ENCODE measurements at regions of chr5 and their contacts with region 1.

Region 1: DNA sequence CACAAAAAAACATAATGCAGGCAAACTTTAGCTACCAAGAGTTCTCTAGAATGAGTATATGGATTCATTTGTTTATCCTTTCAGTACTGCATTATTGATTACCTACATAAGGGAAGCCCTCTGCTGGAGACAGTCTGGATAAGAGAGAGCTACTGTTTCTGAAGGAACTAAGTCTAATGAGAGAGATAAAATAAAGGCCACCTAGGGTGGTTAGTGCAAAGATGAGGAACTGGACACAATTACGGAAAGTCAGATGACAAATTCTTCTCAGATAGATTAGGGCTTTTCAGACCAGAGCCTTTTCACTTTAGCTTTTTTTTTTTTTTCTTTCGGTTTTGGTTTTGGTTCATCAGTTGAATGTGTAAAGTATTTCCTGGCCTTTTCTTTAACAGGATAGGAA is 31.3 kb downstream of the ISOC1 start:
- DNase-seq: peak; percentile 25
- CTCF ChIP-seq: no peak

Region 2: DNA sequence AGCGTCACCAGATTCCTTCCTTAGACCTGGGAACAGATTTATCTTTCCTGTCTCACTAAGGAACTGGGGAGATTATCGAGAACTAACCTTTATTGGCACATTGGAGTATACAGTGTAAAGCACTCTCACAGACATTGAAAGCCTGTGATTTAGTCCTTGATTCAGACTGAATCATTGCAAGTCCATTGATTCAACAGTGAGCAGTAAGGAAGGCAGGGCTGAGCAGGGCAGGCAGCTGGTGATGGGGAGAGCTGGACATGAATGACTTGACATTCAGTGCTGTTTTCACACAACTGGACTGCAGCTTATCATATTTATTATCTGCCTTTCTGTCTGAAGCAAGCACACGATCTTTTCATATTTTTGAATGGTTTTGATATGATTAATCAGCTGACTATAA is 15.1 kb before region 1 on chr5:
- CTCF ChIA-PET with region 1: interaction called, 29 read pairs
- POLR2A ChIA-PET with region 1: no interaction called
- DNase-seq: no peak
- CTCF ChIP-seq: no peak

Measured in GM10248 (cell line).